GM12878 (cell line): ENCODE measurements at regions of chr10 and their contacts with region 1.

Region 1: DNA sequence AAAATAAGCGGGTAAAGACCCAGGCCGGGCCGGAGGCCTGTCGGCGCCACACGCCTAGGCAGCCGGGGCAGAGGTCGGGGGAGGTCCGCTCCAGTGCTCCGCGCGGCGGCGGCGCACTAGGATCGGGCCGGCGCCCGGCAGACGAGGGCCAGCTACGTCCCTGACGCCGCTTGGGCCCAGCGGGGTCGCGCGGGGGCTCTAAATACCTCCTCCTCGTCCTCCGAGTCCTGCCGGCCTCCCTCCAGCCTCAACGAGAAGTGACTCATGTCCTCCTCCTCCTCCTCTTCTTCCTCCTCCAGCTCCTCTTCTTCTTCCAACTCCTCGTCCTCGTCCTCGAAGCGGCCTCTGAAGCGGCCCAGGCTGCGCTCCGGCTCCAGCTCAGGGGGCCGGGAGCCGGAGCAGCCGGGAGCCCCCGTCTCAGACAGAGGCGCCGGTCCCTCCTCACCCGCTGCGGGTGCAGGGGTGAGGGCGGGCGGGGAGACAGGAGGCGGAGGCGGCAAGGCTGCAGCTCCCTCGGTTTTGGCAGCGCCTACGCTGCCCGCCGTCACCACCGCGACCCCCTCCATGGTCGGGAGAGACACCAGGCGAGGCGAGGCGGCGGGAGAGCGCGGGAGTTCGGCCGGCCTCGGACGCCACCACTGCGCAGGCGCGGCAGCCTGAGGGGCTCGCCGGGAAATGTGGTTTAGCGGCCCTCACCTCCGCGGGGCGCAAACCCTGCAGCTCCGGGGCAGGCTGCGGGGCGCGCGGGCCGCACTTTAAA is at the start of gene PCGF6:
- DNase-seq: no peak
- ATAC-seq: peak; percentile 94
- H3K4me3 ChIP-seq: peak within 1 kb of the TSS; percentile 85
- H3K27ac ChIP-seq: peak within 1 kb of the TSS; percentile 82
- H3K4me1 ChIP-seq: no peaks in the 10 kb centered on the region
- H3K27me3 ChIP-seq: no peaks in the 10 kb centered on the region
- CTCF ChIP-seq: no peak; a peak in 1 of 6 replicates
- EP300 ChIP-seq: no peak
- POLR2A ChIP-seq: peak; percentile 82
- RAD21 ChIP-seq: no peak
- polyA plus RNA-seq, gene PCGF6: 6.5 to 8.2 TPM

Region 2: GRCh38 chr10:103367782-103368518 is 17.3 kb after region 1 on chr10 and contains the start of gene TAF5:
- CTCF ChIA-PET with region 1: interaction called, 4 read pairs
- POLR2A ChIA-PET with region 1: interaction called, 8 read pairs
- RAD21 ChIA-PET with region 1: no interaction called
- SMC1A ChIA-PET with region 1: interaction called, 3 read pairs
- in situ Hi-C with region 1: no loop called
- intact Hi-C with region 1: loop called (anchors 2 kb)
- DNase-seq: peak; percentile 95
- ATAC-seq: peak; percentile 82
- H3K4me3 ChIP-seq: peak within 1 kb of the TSS; percentile 75
- H3K27ac ChIP-seq: peak within 1 kb of the TSS; percentile 81
- H3K4me1 ChIP-seq: peaks cover 12% of the 10 kb centered on the region
- H3K27me3 ChIP-seq: no peaks in the 10 kb centered on the region
- CTCF ChIP-seq: no peak
- EP300 ChIP-seq: no peak
- POLR2A ChIP-seq: peak; percentile 86
- RAD21 ChIP-seq: no peak
- polyA plus RNA-seq, gene TAF5: 3.7 to 3.8 TPM